ENCODE measurements at regions of chr20 and their contacts with region 1.

Region 1: GRCh38 chr20:9392892-9393857 is 121.2 kb upstream of the LAMP5 start:
- DNase-seq: peak; percentile 89

Region 2: GRCh38 chr20:8756410-8756809 is 636.8 kb before region 1 on chr20:
- intact Hi-C with region 1: loop called in 1 of 2 experiments (anchors 10 kb)
- DNase-seq: peak; percentile 72

Measured in posterior vena cava (tissue), 2 donors.